ENCODE measurements at regions of chr21 and their contacts with region 1.

Region 1: GRCh38 chr21:36976882-36977651 is 10.6 kb upstream of the HLCS start:
- DNase-seq: peak; percentile 79
- H3K4me3 ChIP-seq: peak overlapping the region in 1 of 2 experiments; percentile 18; a peak in 1 of 4 replicates
- H3K27ac ChIP-seq: peak overlapping the region; percentile 15 to 44; a peak in 3 of 4 replicates
- H3K4me1 ChIP-seq: peaks cover 0 to 5% of the 10 kb centered on the region in 2 experiments; a peak in 3 of 4 replicates
- H3K27me3 ChIP-seq: no peaks in the 10 kb centered on the region
- CTCF ChIP-seq: peak; percentile 89
- EP300 ChIP-seq: no peak
- RAD21 ChIP-seq: peak; percentile 94

Region 2: DNA sequence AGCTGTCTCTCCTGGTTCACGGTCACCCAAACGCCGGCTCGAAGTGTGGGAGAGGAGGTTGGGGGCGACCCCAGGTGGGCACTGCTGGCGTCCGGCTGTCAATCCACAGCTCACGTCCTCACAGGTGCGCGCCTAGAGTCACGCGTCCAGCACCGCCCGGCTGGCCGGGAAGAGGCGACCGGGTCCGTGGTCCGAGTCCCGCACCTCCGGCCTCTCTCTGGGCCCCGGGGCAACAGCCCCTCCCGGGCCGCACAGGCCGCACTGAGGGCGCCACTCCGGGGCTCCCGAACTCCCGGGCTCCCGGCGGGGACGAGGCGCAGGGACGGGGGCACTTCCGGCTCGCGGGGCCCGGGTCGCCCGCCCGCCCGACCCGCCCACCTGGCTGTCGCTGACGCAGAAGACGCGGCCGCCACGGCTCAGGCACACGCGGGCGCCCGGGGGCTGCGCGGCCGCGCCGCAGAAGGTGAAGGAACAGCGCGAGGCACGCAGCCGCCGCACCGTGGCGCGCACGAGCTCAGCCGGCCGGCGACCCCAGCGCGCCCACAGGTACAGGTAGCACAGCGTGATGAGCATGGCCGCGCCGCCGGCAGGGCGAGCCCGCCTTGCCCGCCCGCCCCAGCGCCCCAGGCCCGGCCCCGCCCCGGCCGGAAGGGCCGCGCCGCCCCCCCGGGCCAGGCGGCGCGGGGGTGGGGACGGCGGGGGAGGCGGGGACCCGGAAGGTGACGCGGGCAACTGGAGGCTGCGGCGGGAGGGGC is 10.8 kb before region 1 on chr21 and contains the start of gene HLCS:
- CTCF ChIA-PET with region 1: interaction called, 38 read pairs
- POLR2A ChIA-PET with region 1: interaction called, 3 read pairs
- DNase-seq: peak; percentile 89
- H3K4me3 ChIP-seq: peak within 1 kb of the TSS; percentile 64 to 87
- H3K27ac ChIP-seq: peak within 1 kb of the TSS; percentile 57 to 74
- H3K4me1 ChIP-seq: peaks cover 3 to 12% of the 10 kb centered on the region in 2 experiments; a peak in 2 of 4 replicates
- H3K27me3 ChIP-seq: no peaks in the 10 kb centered on the region
- CTCF ChIP-seq: no peak
- EP300 ChIP-seq: no peak
- RAD21 ChIP-seq: no peak
- polyA plus RNA-seq, gene HLCS: 13.0 and 17.7 TPM in 2 replicates

Region 3: GRCh38 chr21:37009740-37010341 is 32.8 kb after region 1 on chr21:
- CTCF ChIA-PET with region 1: interaction called, 31 read pairs
- POLR2A ChIA-PET with region 1: no interaction called
- DNase-seq: peak; percentile 91
- H3K4me3 ChIP-seq: peak overlapping the region; percentile 36 to 42; a peak in 3 of 4 replicates
- H3K27ac ChIP-seq: no peak overlapping the region; a peak in 1 of 4 replicates
- H3K4me1 ChIP-seq: no peaks in the 10 kb centered on the region; a peak in 1 of 4 replicates
- H3K27me3 ChIP-seq: no peaks in the 10 kb centered on the region; the same call in 1 of the 2 replicates
- CTCF ChIP-seq: peak; percentile 85
- EP300 ChIP-seq: no peak
- RAD21 ChIP-seq: peak; percentile 76

Region 4: GRCh38 chr21:37087188-37087587 is 110.1 kb after region 1 on chr21:
- CTCF ChIA-PET with region 1: interaction called, 19 read pairs
- POLR2A ChIA-PET with region 1: interaction called, 5 read pairs
- DNase-seq: no peak
- H3K4me3 ChIP-seq: no peak overlapping the region
- H3K27ac ChIP-seq: no peak overlapping the region
- H3K4me1 ChIP-seq: peaks cover 3% of the 10 kb centered on the region in 2 experiments; a peak in 2 of 4 replicates
- H3K27me3 ChIP-seq: no peaks in the 10 kb centered on the region
- CTCF ChIP-seq: peak; percentile 60
- EP300 ChIP-seq: no peak
- RAD21 ChIP-seq: peak; percentile 60

Measured in SK-N-SH (cell line).